Naive thymus-derived CD4-positive, alpha-beta T cell (primary cell): ENCODE measurements at regions of chr1 and their contacts with region 1.

Region 1: GRCh38 chr1:230310381-230311163 is 115.6 kb downstream of the PGBD5 start:
- DNase-seq: peak; percentile 25 to 70 (median 54)
- ATAC-seq: peak; percentile 87
- H3K4me3 ChIP-seq: no peak overlapping the region
- H3K4me3 Mint-ChIP-seq: peak overlapping the region in 2 of 10 donors; percentile 6 to 30
- H3K27ac ChIP-seq: no peak overlapping the region
- H3K27ac Mint-ChIP-seq: no peak overlapping the region
- H3K4me1 ChIP-seq: peaks cover 3% of the 10 kb centered on the region in 2 donors
- H3K4me1 Mint-ChIP-seq: peaks cover 4 to 10% (median 4%) of the 10 kb centered on the region in 7 donors
- H3K27me3 ChIP-seq: no peaks in the 10 kb centered on the region
- H3K27me3 Mint-ChIP-seq: peaks cover 5 to 19% (median 10%) of the 10 kb centered on the region in 5 donors

Region 2: DNA sequence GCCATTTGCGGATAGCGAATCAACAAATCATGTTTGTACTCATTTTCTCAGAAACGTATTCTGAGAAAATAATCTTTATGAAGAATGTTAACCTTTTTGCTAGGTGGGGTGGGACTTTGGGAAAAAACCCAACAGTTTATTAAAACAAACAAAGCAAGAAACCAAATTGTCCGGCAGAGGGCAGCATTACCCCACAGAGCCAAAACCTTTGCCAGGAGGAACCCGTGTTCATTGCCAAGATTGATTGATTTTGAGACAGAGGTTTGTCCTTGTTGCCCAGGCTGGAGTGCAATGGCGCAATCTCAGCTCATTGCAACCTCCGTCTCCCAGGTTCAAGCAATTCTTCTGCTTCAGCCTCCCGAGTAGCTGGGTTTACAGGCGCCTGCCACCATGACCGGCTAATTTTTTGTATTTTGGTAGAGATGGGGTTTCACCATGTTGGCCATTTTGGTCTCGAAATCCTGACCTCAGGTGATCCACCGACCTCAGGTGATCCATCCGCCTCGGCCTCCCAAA is 1646.1 kb before region 1 on chr1:
- CTCF ChIA-PET with region 1: no interaction called
- POLR2A ChIA-PET with region 1: no interaction called
- intact Hi-C with region 1: loop called in 1 of 2 experiments (anchors 1 kb)
- DNase-seq: peak; percentile 54 to 83 (median 71)
- ATAC-seq: peak; percentile 73
- H3K4me3 ChIP-seq: no peak overlapping the region
- H3K4me3 Mint-ChIP-seq: no peak overlapping the region
- H3K27ac ChIP-seq: no peak overlapping the region
- H3K27ac Mint-ChIP-seq: no peak overlapping the region
- H3K4me1 ChIP-seq: no peaks in the 10 kb centered on the region
- H3K4me1 Mint-ChIP-seq: peaks cover 0 to 2% (median 0%) of the 10 kb centered on the region in 7 donors
- H3K27me3 ChIP-seq: no peaks in the 10 kb centered on the region
- H3K27me3 Mint-ChIP-seq: peaks cover 0 to 28% (median 11%) of the 10 kb centered on the region in 5 donors

Region 3: DNA sequence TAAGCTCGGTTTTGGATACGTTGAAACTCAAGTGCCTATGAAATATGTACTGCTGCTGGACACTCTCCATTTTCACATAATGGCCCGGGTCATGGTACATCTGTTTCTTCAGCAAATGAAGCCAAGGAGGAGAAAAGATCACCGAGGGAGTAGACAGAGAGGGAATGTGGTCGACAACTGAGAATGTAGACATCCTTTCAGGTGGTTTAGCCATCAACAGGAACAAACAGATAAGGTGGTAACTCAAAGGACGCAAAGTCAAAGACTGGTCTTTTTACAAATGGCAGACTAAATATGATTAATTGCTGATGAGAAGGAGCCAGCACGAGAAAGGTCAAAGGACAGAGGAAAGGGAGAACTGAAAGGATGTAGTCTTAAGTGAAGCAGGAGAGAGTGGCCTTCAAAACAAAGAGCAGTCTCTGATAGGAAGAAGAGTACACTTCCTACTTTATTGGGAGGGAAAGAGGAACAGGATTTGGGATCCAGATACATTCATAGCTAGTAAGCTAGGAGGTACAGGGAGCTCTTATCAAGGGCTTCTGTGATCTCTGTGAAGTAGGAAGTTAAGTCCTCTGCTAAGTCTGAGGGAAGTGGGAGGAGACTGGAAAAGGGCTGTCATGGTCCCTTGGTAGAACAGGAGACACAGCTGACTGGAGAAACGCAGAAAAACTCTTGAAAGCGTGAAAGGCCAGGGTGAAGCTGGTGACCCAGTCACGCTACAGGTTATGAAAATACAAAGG is 830.7 kb before region 1 on chr1:
- CTCF ChIA-PET with region 1: no interaction called
- POLR2A ChIA-PET with region 1: no interaction called
- intact Hi-C with region 1: loop called in 1 of 2 experiments (anchors 1 kb)
- DNase-seq: no peak
- ATAC-seq: no peak
- H3K4me3 ChIP-seq: no peak overlapping the region
- H3K4me3 Mint-ChIP-seq: no peak overlapping the region
- H3K27ac ChIP-seq: no peak overlapping the region
- H3K27ac Mint-ChIP-seq: peak overlapping the region in 2 of 9 donors; percentile 36 to 43
- H3K4me1 ChIP-seq: no peaks in the 10 kb centered on the region
- H3K4me1 Mint-ChIP-seq: peaks cover 4 to 19% (median 9%) of the 10 kb centered on the region in 7 donors
- H3K27me3 ChIP-seq: no peaks in the 10 kb centered on the region
- H3K27me3 Mint-ChIP-seq: no peaks in the 10 kb centered on the region

Region 4: DNA sequence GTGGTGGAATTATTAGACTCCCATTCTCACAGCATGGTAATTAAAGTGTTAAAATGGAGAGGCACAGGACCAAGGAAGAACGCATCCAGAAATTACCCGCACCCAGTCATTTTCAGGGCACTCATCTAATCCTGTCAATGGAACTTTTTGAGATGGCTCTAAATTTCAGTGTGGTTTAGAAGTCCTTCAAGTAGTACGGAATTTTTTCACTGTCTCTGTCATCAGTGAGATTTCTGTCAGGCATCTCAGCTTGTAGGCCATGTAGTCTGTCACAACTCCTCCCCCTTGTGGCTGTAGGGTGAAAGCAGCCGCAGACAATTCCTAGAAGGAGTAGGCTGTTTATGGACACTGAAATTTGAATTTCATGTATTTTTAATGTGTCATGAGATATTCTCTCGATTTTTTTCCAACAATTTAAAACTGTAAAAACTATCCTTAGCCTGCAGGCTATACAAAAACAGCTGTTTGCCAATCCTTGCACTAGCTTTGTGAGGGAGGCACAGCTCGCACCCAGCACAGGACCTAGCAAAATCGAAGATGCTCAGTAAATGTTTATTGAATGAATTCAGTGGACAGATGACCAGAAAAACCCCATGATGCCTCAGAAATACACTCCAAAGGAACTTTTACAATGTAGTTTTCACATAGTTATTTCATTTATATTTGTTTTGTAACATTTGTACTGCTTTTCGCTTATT is 795.8 kb before region 1 on chr1:
- CTCF ChIA-PET with region 1: no interaction called
- POLR2A ChIA-PET with region 1: no interaction called
- intact Hi-C with region 1: loop called (anchors 1 to 2 kb)
- DNase-seq: peak in 8 of 9 donors; percentile 34 to 76 (median 70)
- ATAC-seq: peak; percentile 98
- H3K4me3 ChIP-seq: no peak overlapping the region
- H3K4me3 Mint-ChIP-seq: no peak overlapping the region
- H3K27ac ChIP-seq: no peak overlapping the region
- H3K27ac Mint-ChIP-seq: peak overlapping the region in 5 of 9 donors; percentile 6 to 86 (median 32)
- H3K4me1 ChIP-seq: no peaks in the 10 kb centered on the region
- H3K4me1 Mint-ChIP-seq: peaks cover 0 to 9% (median 7%) of the 10 kb centered on the region in 7 donors
- H3K27me3 ChIP-seq: no peaks in the 10 kb centered on the region
- H3K27me3 Mint-ChIP-seq: peaks cover 0 to 5% (median 0%) of the 10 kb centered on the region in 5 donors

Region 5: DNA sequence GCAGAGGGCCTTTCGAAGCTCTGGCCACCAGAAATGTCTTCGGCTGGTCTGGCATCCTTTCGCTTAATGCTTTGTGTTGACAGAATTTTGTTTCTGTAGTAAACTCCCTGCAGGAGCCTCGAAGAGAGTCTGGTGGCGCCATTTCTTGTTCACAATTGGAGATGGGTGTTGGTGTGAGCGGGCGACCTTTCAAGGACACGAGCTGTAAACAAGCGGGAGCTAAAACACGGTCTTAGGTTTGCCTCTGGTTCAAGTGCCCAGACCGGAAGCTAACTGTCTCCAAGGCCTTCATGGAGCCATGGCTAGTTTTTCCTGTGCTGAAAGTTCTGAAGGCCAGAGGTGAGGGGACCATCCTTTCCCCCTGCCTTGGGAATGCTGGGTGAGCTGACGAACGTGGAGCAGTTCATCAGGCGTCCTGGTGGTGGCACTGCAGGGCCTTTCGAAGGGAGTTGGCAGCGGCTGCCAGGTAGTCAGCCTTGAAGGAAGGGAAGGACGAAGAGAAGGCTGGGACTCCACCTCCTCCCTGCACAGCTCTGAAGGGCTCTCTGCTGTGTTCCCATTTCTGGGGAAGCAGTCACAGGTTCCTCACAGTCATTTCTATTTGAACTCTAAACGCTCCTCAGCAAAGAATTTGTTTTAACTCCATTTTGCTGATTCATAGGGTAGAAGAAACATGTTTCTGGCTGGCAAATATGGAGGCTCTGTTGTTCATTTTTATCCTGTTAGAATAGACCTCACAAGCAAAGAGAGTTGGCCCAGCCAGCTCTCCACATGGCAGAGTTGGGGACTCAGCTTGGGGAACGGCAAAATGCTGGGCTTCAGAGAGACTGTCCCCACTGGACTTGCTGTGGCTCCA is 649.3 kb before region 1 on chr1:
- CTCF ChIA-PET with region 1: interaction called, 11 read pairs
- POLR2A ChIA-PET with region 1: no interaction called
- intact Hi-C with region 1: loop called (anchors 1 kb)
- DNase-seq: peak; percentile 38 to 72 (median 67)
- ATAC-seq: peak; percentile 87
- H3K4me3 ChIP-seq: no peak overlapping the region
- H3K4me3 Mint-ChIP-seq: no peak overlapping the region
- H3K27ac ChIP-seq: no peak overlapping the region
- H3K27ac Mint-ChIP-seq: peak overlapping the region in 3 of 9 donors; percentile 8 to 80 (median 66)
- H3K4me1 ChIP-seq: peaks cover 13% of the 10 kb centered on the region in 2 donors
- H3K4me1 Mint-ChIP-seq: peaks cover 0 to 11% (median 5%) of the 10 kb centered on the region in 7 donors
- H3K27me3 ChIP-seq: no peaks in the 10 kb centered on the region
- H3K27me3 Mint-ChIP-seq: no peaks in the 10 kb centered on the region

Region 6: GRCh38 chr1:229714964-229715603 is 595.5 kb before region 1 on chr1:
- CTCF ChIA-PET with region 1: interaction called, 3 read pairs
- POLR2A ChIA-PET with region 1: no interaction called
- intact Hi-C with region 1: loop called in 1 of 2 experiments (anchors 1 kb)
- DNase-seq: peak in 1 of 9 donors; percentile 35
- ATAC-seq: no peak
- H3K4me3 ChIP-seq: no peak overlapping the region
- H3K4me3 Mint-ChIP-seq: no peak overlapping the region
- H3K27ac ChIP-seq: no peak overlapping the region
- H3K27ac Mint-ChIP-seq: no peak overlapping the region
- H3K4me1 ChIP-seq: no peaks in the 10 kb centered on the region
- H3K4me1 Mint-ChIP-seq: no peaks in the 10 kb centered on the region
- H3K27me3 ChIP-seq: no peaks in the 10 kb centered on the region
- H3K27me3 Mint-ChIP-seq: peaks cover 0 to 14% (median 2%) of the 10 kb centered on the region in 5 donors

Region 7: DNA sequence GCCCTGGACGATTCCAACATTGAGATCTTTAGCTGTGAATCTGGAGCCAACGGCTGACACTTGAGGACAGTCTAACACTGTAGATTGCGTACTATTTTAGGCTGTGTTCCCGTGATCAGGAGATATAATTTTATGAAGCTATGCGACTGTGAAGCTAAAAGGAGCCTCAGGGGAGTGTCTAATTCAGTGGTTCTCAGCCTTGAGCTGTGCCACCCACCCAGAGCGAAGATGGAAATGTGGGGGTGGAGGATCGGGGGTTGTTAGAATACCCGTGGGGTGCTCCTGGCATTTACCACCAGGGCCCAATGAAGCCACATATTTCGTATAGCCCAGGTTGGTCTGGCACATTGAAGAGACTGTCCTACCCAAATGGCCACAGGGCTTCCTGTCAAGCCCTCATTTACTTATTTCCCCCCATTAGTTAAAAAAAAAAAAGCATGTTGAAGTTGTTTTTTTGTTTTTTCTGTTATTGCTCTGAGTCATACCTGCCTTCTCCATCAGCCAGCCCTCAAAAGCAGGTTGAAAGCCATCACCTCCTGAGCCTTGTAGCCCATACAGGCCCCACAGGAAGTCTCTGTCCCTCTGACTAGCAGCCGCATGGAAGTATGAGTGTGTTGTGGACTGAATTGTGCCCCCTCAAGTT is 101.8 kb before region 1 on chr1:
- CTCF ChIA-PET with region 1: no interaction called
- POLR2A ChIA-PET with region 1: no interaction called
- intact Hi-C with region 1: loop called in 1 of 2 experiments (anchors 10 kb)
- DNase-seq: peak in 1 of 9 donors; percentile 61
- ATAC-seq: peak; percentile 58
- H3K4me3 ChIP-seq: no peak overlapping the region
- H3K4me3 Mint-ChIP-seq: peak overlapping the region in 1 of 10 donors; percentile 72
- H3K27ac ChIP-seq: no peak overlapping the region
- H3K27ac Mint-ChIP-seq: peak overlapping the region in 8 of 9 donors; percentile 1 to 88 (median 30)
- H3K4me1 ChIP-seq: no peaks in the 10 kb centered on the region
- H3K4me1 Mint-ChIP-seq: peaks cover 24 to 54% (median 37%) of the 10 kb centered on the region in 7 donors
- H3K27me3 ChIP-seq: no peaks in the 10 kb centered on the region
- H3K27me3 Mint-ChIP-seq: no peaks in the 10 kb centered on the region

Region 8: DNA sequence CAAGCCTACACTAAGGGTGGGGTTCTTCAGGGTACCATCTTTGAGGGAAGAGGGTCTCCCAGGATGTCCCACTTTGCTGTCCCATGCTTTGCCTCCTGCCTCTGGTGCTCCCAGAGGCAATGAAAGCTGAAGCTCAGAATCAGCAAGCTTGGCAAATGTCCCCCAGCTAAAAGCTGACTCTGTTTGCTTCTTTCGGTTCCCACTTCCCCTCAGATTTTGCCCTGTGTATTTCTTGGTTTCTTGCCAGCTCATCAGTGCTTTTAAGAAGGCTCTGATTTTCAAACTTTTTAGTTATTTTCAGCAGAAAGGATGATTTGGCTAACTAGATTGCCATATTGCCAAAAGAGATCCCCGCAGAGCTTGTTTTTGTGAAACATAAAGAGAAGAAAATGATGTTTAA is 298.6 kb after region 1 on chr1:
- CTCF ChIA-PET with region 1: no interaction called
- POLR2A ChIA-PET with region 1: no interaction called
- intact Hi-C with region 1: no loop called
- DNase-seq: no peak
- ATAC-seq: no peak
- H3K4me3 ChIP-seq: no peak overlapping the region
- H3K4me3 Mint-ChIP-seq: no peak overlapping the region
- H3K27ac ChIP-seq: no peak overlapping the region
- H3K27ac Mint-ChIP-seq: no peak overlapping the region
- H3K4me1 ChIP-seq: no peaks in the 10 kb centered on the region
- H3K4me1 Mint-ChIP-seq: no peaks in the 10 kb centered on the region
- H3K27me3 ChIP-seq: no peaks in the 10 kb centered on the region
- H3K27me3 Mint-ChIP-seq: peaks cover 2 to 16% (median 6%) of the 10 kb centered on the region in 5 donors